Activated CD4-positive, alpha-beta T cell treated with anti-CD3 and anti-CD28 coated beads for 36 hours (primary cell): ENCODE measurements at regions of chr3 and their contacts with region 1.

Region 1: DNA sequence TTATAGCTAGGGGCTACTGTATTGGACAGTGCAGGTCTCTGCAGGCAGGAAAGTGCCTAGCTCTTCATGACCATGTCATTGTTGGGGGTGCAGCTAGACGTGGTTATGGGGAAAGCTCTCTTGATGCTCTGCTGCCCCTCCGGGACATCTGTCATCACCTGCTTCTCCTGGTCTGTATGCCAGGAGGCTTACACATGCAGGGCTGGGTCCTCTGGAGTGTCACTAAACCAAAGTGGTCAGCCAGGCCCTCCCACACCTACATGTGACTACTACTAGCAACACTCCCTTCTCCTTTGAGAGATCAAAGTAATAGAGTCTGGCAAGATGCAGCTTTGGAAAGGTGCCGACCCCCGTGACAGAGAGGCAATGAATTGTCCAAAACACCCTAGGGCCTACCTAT is 98.5 kb downstream of the SST start:
- DNase-seq: no peak
- ATAC-seq: no peak
- H3K4me3 Mint-ChIP-seq: no peak overlapping the region
- H3K27ac Mint-ChIP-seq: no peak overlapping the region
- H3K4me1 Mint-ChIP-seq: no peaks in the 10 kb centered on the region
- H3K27me3 Mint-ChIP-seq: peaks cover 14% of the 10 kb centered on the region

Region 2: GRCh38 chr3:187616307-187616972 is 44.7 kb after region 1 on chr3:
- CTCF ChIA-PET with region 1: interaction called, 10 read pairs
- POLR2A ChIA-PET with region 1: no interaction called
- intact Hi-C with region 1: no loop called
- DNase-seq: peak; percentile 80
- ATAC-seq: peak; percentile 71
- H3K4me3 Mint-ChIP-seq: no peak overlapping the region
- H3K27ac Mint-ChIP-seq: no peak overlapping the region
- H3K4me1 Mint-ChIP-seq: no peaks in the 10 kb centered on the region
- H3K27me3 Mint-ChIP-seq: peaks cover 8% of the 10 kb centered on the region